IMR-90 (cell line): ENCODE measurements at regions of chr7 and their contacts with region 1.

Region 1: DNA sequence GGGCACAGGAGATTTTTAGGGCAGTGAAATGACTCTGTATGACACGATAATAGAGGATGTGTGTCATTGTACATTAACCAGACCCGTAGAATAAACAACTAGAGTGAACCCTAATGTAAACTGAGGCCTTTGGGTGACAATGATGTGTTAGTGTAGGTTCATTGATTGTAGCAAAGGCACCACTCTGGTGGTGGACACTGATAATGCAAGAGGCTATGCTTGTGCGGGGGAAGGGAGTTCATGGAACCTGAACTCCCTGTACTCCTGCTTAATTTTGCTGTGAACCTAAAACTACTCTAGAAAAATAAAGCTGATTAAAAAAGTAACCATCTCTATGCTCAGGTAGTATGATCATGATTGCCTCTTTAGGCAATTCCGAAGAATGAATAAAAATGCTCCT is 96.3 kb upstream of the VIPR2 start:
- DNase-seq: no peak
- ATAC-seq: no peak
- H3K4me3 ChIP-seq: no peak overlapping the region
- H3K27ac ChIP-seq: no peak overlapping the region
- H3K4me1 ChIP-seq: no peaks in the 10 kb centered on the region
- H3K27me3 ChIP-seq: no peaks in the 10 kb centered on the region
- CTCF ChIP-seq: no peak
- POLR2A ChIP-seq: no peak
- RAD21 ChIP-seq: no peak

Region 2: GRCh38 chr7:159272739-159273138 is 31.8 kb after region 1 on chr7:
- CTCF ChIA-PET with region 1: no interaction called
- POLR2A ChIA-PET with region 1: no interaction called
- dilution Hi-C with region 1: no loop called
- in situ Hi-C with region 1: no loop called
- intact Hi-C with region 1: loop called (anchors 1 kb)
- DNase-seq: no peak
- ATAC-seq: no peak
- H3K4me3 ChIP-seq: no peak overlapping the region
- H3K27ac ChIP-seq: no peak overlapping the region
- H3K4me1 ChIP-seq: no peaks in the 10 kb centered on the region
- H3K27me3 ChIP-seq: no peaks in the 10 kb centered on the region
- CTCF ChIP-seq: no peak
- POLR2A ChIP-seq: no peak
- RAD21 ChIP-seq: no peak